ENCODE measurements at regions of chr14 and their contacts with region 1.

Region 1: DNA sequence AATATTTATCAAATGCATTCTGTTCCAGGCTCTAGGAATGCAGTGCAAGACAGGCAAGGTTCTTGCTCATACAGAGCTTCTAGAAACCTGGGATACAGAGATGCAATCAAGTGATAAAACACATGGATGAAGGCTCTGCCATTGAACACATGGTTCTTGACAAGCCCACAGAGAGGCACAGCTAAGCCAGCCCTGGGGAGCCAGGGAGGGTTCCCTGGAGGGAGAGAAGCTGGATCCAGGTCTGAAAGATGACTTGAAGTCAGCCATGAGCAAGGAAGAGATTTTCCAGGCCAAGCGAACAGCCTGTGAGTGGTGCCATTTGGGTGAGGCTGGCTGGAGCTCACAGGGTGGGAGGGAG is 66.2 kb downstream of the IRF2BPL start:
- DNase-seq: no peak
- H3K4me3 Mint-ChIP-seq: peak overlapping the region; percentile 78
- H3K27ac Mint-ChIP-seq: peak overlapping the region; percentile 97
- H3K4me1 Mint-ChIP-seq: peaks cover 81% of the 10 kb centered on the region
- H3K27me3 Mint-ChIP-seq: peaks cover 4% of the 10 kb centered on the region

Region 2: GRCh38 chr14:77023001-77023996 is 61.0 kb after region 1 on chr14:
- intact Hi-C with region 1: loop called (anchors 1 kb)
- DNase-seq: peak; percentile 74
- H3K4me3 Mint-ChIP-seq: peak overlapping the region; percentile 74
- H3K27ac Mint-ChIP-seq: peak overlapping the region; percentile 81
- H3K4me1 Mint-ChIP-seq: peaks cover 35% of the 10 kb centered on the region
- H3K27me3 Mint-ChIP-seq: no peaks in the 10 kb centered on the region

Region 3: DNA sequence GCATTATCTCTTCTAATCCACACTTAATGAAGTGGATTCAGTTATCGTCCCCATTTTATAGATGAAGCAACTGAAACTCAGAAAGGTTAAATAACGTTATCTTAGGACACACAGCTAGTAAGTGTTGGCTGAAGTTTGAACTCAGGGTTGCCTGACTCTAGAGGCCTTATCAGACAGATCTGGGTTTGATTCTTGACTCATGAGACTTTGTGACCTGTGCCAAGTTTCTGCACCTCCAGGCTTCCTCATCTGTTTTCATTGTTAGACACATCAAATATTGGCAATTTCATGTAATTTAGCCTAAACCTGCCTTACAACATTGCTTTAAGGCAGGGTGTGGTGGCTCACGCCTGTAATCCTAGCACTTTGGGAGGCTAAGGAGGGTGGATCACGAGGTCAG is 84.5 kb after region 1 on chr14:
- intact Hi-C with region 1: no loop called
- DNase-seq: no peak
- H3K4me3 Mint-ChIP-seq: no peak overlapping the region
- H3K27ac Mint-ChIP-seq: no peak overlapping the region
- H3K4me1 Mint-ChIP-seq: peaks cover 39% of the 10 kb centered on the region
- H3K27me3 Mint-ChIP-seq: no peaks in the 10 kb centered on the region

Measured in activated CD4-positive, alpha-beta T cell treated with anti-CD3 and anti-CD28 coated beads, Interleukin-2, amount 10 ng/mL, durations not matched to agents 24 days and 14 days (primary cell).